Naive thymus-derived CD4-positive, alpha-beta T cell (primary cell): ENCODE measurements at regions of chr16 and their contacts with region 1.

Region 1: GRCh38 chr16:30874821-30875717 is 18.8 kb downstream of the BCL7C start:
- DNase-seq: peak; percentile 78 to 90 (median 87)
- ATAC-seq: peak; percentile 97
- H3K4me3 ChIP-seq: peak overlapping the region; percentile 83
- H3K4me3 Mint-ChIP-seq: peak overlapping the region; percentile 84 to 98 (median 97)
- H3K27ac ChIP-seq: peak overlapping the region; percentile 87
- H3K27ac Mint-ChIP-seq: peak overlapping the region; percentile 79 to 99 (median 95)
- H3K4me1 ChIP-seq: peaks cover 11 to 25% of the 10 kb centered on the region in 2 donors
- H3K4me1 Mint-ChIP-seq: peaks cover 21 to 40% (median 32%) of the 10 kb centered on the region in 7 donors
- H3K27me3 ChIP-seq: no peaks in the 10 kb centered on the region
- H3K27me3 Mint-ChIP-seq: no peaks in the 10 kb centered on the region

Region 2: DNA sequence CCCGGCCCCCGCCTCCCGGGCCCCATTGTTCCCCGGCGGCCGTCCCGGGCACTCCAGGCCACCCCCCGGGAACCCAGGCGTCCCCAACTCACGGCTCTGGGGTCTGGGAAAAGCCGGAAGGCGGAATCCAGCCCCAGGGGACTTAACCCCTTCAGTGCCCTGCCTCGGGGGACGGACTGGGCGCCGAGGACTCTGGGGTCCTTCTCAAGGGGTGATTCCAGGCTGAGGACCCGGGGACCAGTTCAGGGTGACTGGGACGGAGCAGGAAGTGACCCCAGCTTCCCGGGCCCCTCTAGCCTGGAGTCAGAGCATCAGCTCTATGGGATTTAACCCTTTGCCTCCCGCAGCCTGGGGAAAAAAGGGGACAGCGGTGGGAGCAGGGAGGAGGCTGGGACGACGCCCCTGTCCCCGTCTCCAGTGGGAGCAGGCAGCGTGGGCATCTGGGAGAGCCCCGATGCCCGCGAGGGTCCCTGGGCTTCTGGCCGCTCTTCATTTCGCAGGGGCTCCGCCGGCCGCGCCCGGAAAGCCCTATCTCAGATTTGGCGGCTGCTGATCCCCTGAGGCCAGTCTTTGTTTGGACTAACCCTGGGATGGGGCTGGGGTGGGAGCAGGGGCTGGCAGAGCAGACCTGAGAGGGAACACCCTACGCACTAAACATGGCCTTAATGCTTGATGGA is 88.0 kb before region 1 on chr16 and contains the start of gene ZNF629:
- CTCF ChIA-PET with region 1: no interaction called
- POLR2A ChIA-PET with region 1: interaction called, 3 read pairs
- intact Hi-C with region 1: loop called in 1 of 2 experiments (anchors 1 kb)
- DNase-seq: peak in 5 of 9 donors; percentile 32 to 42 (median 33)
- ATAC-seq: peak; percentile 70
- H3K4me3 ChIP-seq: peak within 1 kb of the TSS; percentile 60
- H3K4me3 Mint-ChIP-seq: peak within 1 kb of the TSS; percentile 74 to 94 (median 88)
- H3K27ac ChIP-seq: peak within 1 kb of the TSS; percentile 68
- H3K27ac Mint-ChIP-seq: peak within 1 kb of the TSS in 8 of 9 donors; percentile 8 to 85 (median 50)
- H3K4me1 ChIP-seq: peaks cover 7% of the 10 kb centered on the region in 2 donors
- H3K4me1 Mint-ChIP-seq: peaks cover 0 to 25% (median 22%) of the 10 kb centered on the region in 7 donors
- H3K27me3 ChIP-seq: peaks cover 0 to 7% of the 10 kb centered on the region in 2 donors
- H3K27me3 Mint-ChIP-seq: peaks cover 0 to 43% (median 0%) of the 10 kb centered on the region in 5 donors
- total RNA-seq, gene ZNF629: 2.4 to 11.1 (median 4.2) TPM

Region 3: DNA sequence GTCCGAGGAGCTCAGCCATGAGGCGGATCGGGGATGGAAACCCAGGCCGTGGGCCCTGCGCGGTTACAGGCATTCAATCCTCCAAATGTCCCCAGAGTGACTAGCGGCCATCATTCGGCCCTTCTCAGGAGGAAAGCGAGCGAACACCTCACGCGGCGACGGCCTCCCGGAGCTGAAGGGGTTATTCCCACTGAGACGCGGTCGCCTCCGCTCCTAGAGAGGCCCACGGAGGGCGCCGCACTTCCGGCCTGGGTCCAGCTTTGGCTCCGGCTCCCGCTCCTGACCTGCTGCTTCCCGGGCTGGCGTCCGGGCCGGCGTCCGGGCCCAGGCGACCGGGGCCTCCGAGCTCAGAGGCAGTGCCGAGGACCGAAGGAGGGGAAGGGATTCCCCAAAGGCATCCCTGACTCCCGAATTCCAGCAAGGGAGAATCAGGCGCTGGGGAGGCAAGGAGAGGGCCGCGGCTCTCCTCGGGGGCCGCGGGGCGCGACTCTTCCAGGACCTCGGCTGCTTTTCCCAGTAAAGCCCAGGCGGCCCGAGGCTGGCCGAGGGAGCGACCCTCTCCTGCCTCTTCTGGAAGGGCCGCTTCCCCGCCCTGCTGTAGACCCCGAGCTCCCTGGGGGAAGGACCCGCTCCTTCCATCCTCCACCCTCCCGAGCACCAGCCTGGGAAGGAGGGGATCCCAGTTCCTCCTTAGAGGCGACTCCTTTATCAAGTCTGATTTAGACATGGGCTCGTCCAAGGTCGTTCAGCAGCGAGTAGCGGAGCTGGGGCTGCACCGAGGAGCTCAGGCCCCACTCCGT is 69.5 kb before region 1 on chr16:
- CTCF ChIA-PET with region 1: no interaction called
- POLR2A ChIA-PET with region 1: interaction called, 33 read pairs
- intact Hi-C with region 1: loop called in 1 of 2 experiments (anchors 1 kb)
- DNase-seq: peak; percentile 32 to 63 (median 52)
- ATAC-seq: peak; percentile 92
- H3K4me3 ChIP-seq: peak overlapping the region; percentile 86
- H3K4me3 Mint-ChIP-seq: peak overlapping the region; percentile 79 to 99 (median 90)
- H3K27ac ChIP-seq: peak overlapping the region; percentile 76
- H3K27ac Mint-ChIP-seq: peak overlapping the region in 8 of 9 donors; percentile 61 to 94 (median 82)
- H3K4me1 ChIP-seq: peaks cover 7 to 10% of the 10 kb centered on the region in 2 donors
- H3K4me1 Mint-ChIP-seq: peaks cover 14 to 31% (median 22%) of the 10 kb centered on the region in 7 donors
- H3K27me3 ChIP-seq: no peaks in the 10 kb centered on the region
- H3K27me3 Mint-ChIP-seq: peaks cover 0 to 24% (median 0%) of the 10 kb centered on the region in 5 donors

Region 4: DNA sequence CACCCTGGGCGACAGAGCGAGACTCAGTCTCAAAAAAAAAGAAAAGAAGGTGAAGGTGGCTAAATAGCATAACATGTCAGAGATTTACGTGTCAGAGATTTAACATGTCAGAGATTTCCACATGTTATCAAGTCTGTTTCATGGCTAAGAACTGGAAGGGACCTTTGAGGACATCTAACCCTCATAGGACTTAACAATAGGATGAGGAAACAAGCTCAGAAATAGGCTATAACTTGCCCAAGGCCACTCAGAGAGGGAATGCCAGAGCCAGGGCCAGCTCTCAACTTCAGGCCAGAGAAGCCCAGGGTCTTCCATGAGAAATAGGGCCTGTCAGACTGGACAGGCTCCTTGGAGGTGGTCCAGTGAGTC is 61.3 kb before region 1 on chr16:
- CTCF ChIA-PET with region 1: interaction called, 5 read pairs
- POLR2A ChIA-PET with region 1: interaction called, 6 read pairs
- intact Hi-C with region 1: loop called (anchors 2 kb)
- DNase-seq: no peak
- ATAC-seq: no peak
- H3K4me3 ChIP-seq: peak overlapping the region; percentile 70
- H3K4me3 Mint-ChIP-seq: peak overlapping the region; percentile 84 to 92 (median 86)
- H3K27ac ChIP-seq: peak overlapping the region; percentile 73
- H3K27ac Mint-ChIP-seq: peak overlapping the region; percentile 61 to 98 (median 88)
- H3K4me1 ChIP-seq: peaks cover 7% of the 10 kb centered on the region in 2 donors
- H3K4me1 Mint-ChIP-seq: peaks cover 5 to 15% (median 13%) of the 10 kb centered on the region in 7 donors
- H3K27me3 ChIP-seq: no peaks in the 10 kb centered on the region
- H3K27me3 Mint-ChIP-seq: peaks cover 0 to 3% (median 0%) of the 10 kb centered on the region in 5 donors

Region 5: GRCh38 chr16:30829130-30830071 is 45.7 kb before region 1 on chr16:
- CTCF ChIA-PET with region 1: no interaction called
- POLR2A ChIA-PET with region 1: no interaction called
- intact Hi-C with region 1: no loop called
- DNase-seq: no peak
- ATAC-seq: no peak
- H3K4me3 ChIP-seq: no peak overlapping the region
- H3K4me3 Mint-ChIP-seq: no peak overlapping the region
- H3K27ac ChIP-seq: no peak overlapping the region
- H3K27ac Mint-ChIP-seq: no peak overlapping the region
- H3K4me1 ChIP-seq: no peaks in the 10 kb centered on the region
- H3K4me1 Mint-ChIP-seq: no peaks in the 10 kb centered on the region
- H3K27me3 ChIP-seq: no peaks in the 10 kb centered on the region
- H3K27me3 Mint-ChIP-seq: peaks cover 0 to 18% (median 7%) of the 10 kb centered on the region in 5 donors

Region 6: GRCh38 chr16:30844671-30845449 is 30.2 kb before region 1 on chr16:
- CTCF ChIA-PET with region 1: interaction called, 6 read pairs
- POLR2A ChIA-PET with region 1: interaction called, 9 read pairs
- intact Hi-C with region 1: loop called (anchors 1 kb)
- DNase-seq: peak; percentile 50 to 89 (median 83)
- ATAC-seq: peak; percentile 97
- H3K4me3 ChIP-seq: no peak overlapping the region
- H3K4me3 Mint-ChIP-seq: peak overlapping the region in 9 of 10 donors; percentile 22 to 67 (median 64)
- H3K27ac ChIP-seq: peak overlapping the region; percentile 1
- H3K27ac Mint-ChIP-seq: peak overlapping the region; percentile 2 to 82 (median 73)
- H3K4me1 ChIP-seq: peaks cover 0 to 5% of the 10 kb centered on the region in 2 donors
- H3K4me1 Mint-ChIP-seq: peaks cover 6 to 14% (median 8%) of the 10 kb centered on the region in 7 donors
- H3K27me3 ChIP-seq: no peaks in the 10 kb centered on the region
- H3K27me3 Mint-ChIP-seq: no peaks in the 10 kb centered on the region

Region 7: DNA sequence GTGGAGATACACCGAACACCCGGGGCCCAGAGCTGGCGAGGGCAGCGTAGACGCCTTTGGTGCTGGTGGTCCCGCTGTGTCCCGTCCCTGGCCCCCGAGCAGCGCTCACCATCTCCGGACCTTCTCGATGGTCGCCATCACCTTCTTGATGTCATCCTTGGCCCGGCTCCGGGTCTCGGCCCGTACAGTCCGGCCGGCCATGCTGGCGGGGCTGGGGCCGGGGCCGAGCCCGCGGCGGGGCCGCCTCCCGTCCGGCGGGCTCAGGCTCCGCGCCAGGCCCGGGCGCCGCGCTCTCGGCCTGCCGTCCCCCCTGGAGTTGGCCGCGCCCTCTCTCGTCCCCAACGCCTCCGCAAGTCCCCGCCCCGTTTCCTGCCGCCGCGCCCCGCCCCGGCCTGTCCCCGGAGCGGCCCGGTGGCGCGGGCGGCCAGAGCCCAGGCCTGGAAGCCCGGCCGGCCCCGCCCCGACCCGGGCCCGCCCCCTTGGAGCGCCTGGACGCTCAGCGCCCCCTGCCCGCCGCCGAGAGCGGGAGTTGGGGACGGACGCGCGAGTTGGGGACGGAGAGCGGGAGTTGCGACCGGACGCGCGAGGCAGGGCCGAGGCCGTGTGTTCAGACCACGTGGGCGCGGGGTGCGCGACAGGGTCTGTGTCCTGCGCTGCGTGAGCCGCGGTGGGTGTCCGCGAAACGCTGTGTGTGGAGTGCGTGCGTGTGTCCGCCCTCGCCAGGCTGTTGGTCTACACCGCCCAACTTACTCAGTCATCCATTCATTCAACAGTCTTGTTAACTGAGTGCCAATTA is 18.9 kb after region 1 on chr16 and contains the start of gene BCL7C:
- CTCF ChIA-PET with region 1: interaction called, 3 read pairs
- POLR2A ChIA-PET with region 1: interaction called, 38 read pairs
- intact Hi-C with region 1: loop called (anchors 1 kb)
- DNase-seq: peak; percentile 48 to 96 (median 61)
- ATAC-seq: peak; percentile 85
- H3K4me3 ChIP-seq: peak within 1 kb of the TSS; percentile 82
- H3K4me3 Mint-ChIP-seq: peak within 1 kb of the TSS; percentile 84 to 96 (median 90)
- H3K27ac ChIP-seq: peak within 1 kb of the TSS; percentile 82
- H3K27ac Mint-ChIP-seq: peak within 1 kb of the TSS; percentile 80 to 94 (median 91)
- H3K4me1 ChIP-seq: peaks cover 25 to 34% of the 10 kb centered on the region in 2 donors
- H3K4me1 Mint-ChIP-seq: peaks cover 26 to 60% (median 48%) of the 10 kb centered on the region in 7 donors
- H3K27me3 ChIP-seq: no peaks in the 10 kb centered on the region
- H3K27me3 Mint-ChIP-seq: no peaks in the 10 kb centered on the region
- total RNA-seq, gene BCL7C: 17.2 to 23.7 (median 22.7) TPM

Region 8: DNA sequence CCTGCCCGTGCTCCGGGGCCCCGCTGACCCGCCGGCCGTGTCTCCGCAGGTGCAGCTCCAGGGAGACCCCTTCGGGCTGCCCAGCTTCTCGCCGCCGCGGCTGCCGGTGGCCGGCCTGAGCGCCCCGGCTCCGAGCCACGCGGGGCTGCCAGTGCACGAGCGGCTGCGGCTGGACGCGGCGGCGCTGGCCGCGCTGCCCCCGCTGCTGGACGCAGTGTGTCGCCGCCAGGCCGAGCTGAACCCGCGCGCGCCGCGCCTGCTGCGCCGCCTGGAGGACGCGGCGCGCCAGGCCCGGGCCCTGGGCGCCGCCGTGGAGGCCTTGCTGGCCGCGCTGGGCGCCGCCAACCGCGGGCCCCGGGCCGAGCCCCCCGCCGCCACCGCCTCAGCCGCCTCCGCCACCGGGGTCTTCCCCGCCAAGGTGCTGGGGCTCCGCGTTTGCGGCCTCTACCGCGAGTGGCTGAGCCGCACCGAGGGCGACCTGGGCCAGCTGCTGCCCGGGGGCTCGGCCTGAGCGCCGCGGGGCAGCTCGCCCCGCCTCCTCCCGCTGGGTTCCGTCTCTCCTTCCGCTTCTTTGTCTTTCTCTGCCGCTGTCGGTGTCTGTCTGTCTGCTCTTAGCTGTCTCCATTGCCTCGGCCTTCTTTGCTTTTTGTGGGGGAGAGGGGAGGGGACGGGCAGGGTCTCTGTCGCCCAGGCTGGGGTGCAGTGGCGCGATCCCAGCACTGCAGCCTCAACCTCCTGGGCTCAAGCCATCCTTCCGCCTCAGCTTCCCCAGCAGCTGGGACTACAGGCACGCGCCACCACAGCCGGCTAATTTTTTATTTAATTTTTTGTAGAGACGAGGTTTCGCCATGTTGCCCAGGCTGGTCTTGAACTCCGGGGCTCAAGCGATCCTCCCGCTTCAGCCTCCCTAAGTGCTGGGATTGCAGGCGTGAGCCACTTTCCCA is 27.2 kb after region 1 on chr16:
- CTCF ChIA-PET with region 1: interaction called, 23 read pairs
- POLR2A ChIA-PET with region 1: interaction called, 67 read pairs
- intact Hi-C with region 1: loop called (anchors 1 kb)
- DNase-seq: peak in 8 of 9 donors; percentile 38 to 76 (median 61)
- ATAC-seq: peak; percentile 92
- H3K4me3 ChIP-seq: peak overlapping the region; percentile 65
- H3K4me3 Mint-ChIP-seq: peak overlapping the region; percentile 91 to 99 (median 96)
- H3K27ac ChIP-seq: peak overlapping the region; percentile 80
- H3K27ac Mint-ChIP-seq: peak overlapping the region; percentile 90 to 99 (median 98)
- H3K4me1 ChIP-seq: peaks cover 26 to 35% of the 10 kb centered on the region in 2 donors
- H3K4me1 Mint-ChIP-seq: peaks cover 18 to 43% (median 32%) of the 10 kb centered on the region in 7 donors
- H3K27me3 ChIP-seq: no peaks in the 10 kb centered on the region
- H3K27me3 Mint-ChIP-seq: no peaks in the 10 kb centered on the region